ENCODE measurements at regions of chr10 and their contacts with region 1.

Region 1: DNA sequence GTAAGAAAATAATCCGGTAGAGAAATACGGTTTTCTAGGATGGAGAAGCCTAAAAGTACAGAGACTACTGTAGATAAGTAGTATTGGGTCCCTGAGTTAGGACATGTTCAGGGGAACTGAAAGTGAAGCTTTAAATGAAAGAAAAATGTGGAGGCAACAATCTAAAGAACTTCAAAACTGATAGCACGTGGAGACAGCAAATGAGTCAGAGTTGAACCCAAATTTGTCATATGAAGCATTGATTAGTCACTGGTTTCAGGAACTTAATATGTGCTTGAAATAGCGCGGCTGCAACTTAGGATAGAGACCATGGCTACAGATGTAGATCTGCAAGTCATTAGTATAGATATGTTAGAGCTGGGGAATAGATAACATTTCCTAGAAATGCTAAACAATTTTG is 1138.6 kb upstream of the SORCS1 start:
- DNase-seq: no peak

Region 2: GRCh38 chr10:108249940-108250339 is 53.2 kb before region 1 on chr10:
- intact Hi-C with region 1: loop called (anchors 10 kb)
- DNase-seq: no peak

Region 3: GRCh38 chr10:108327706-108328105 is 24.6 kb after region 1 on chr10:
- intact Hi-C with region 1: no loop called
- DNase-seq: no peak

Region 4: GRCh38 chr10:108567899-108568752 is 265.0 kb after region 1 on chr10:
- intact Hi-C with region 1: no loop called
- DNase-seq: no peak